Adrenal gland (tissue), 19 donors: ENCODE measurements at regions of chr3 and their contacts with region 1.

Region 1: GRCh38 chr3:183188895-183189462 is 26.4 kb upstream of the LAMP3 start:
- DNase-seq: peak in 3 of 7 donors; percentile 39 to 70 (median 42)
- H3K4me3 ChIP-seq: no peak overlapping the region
- H3K27ac ChIP-seq: peak overlapping the region in 2 of 5 donors; percentile 45 to 52
- H3K4me1 ChIP-seq: peaks cover 20 to 28% of the 10 kb centered on the region in 2 donors
- H3K27me3 ChIP-seq: no peaks in the 10 kb centered on the region
- CTCF ChIP-seq: peak in 3 of 6 experiments; percentile 13 to 26 (median 21)
- POLR2A ChIP-seq: no peak

Region 2: GRCh38 chr3:182909318-182910040 is 279.5 kb before region 1 on chr3:
- intact Hi-C with region 1: no loop called
- DNase-seq: no peak
- H3K4me3 ChIP-seq: no peak overlapping the region
- H3K27ac ChIP-seq: no peak overlapping the region
- H3K4me1 ChIP-seq: no peaks in the 10 kb centered on the region
- H3K27me3 ChIP-seq: no peaks in the 10 kb centered on the region
- CTCF ChIP-seq: peak; percentile 37 to 61 (median 50)
- POLR2A ChIP-seq: no peak

Region 3: GRCh38 chr3:183377307-183377959 is 188.5 kb after region 1 on chr3:
- intact Hi-C with region 1: loop called (anchors 5 kb)
- DNase-seq: no peak
- H3K4me3 ChIP-seq: no peak overlapping the region
- H3K27ac ChIP-seq: no peak overlapping the region
- H3K4me1 ChIP-seq: peaks cover 3 to 22% of the 10 kb centered on the region in 2 donors
- H3K27me3 ChIP-seq: no peaks in the 10 kb centered on the region
- CTCF ChIP-seq: no peak
- POLR2A ChIP-seq: no peak